Psoas muscle (tissue), 8 donors: ENCODE measurements at regions of chr5 and their contacts with region 1.

Region 1: GRCh38 chr5:172902497-172903200 is 56.6 kb upstream of the RPL26L1 start:
- DNase-seq: peak; percentile 83 to 89
- ATAC-seq: peak; percentile 52 to 75 (median 55)
- H3K4me3 ChIP-seq: no peak overlapping the region
- H3K27ac ChIP-seq: peak overlapping the region; percentile 97
- H3K4me1 ChIP-seq: peaks cover 74% of the 10 kb centered on the region
- H3K27me3 ChIP-seq: no peaks in the 10 kb centered on the region
- CTCF ChIP-seq: peak; percentile 38

Region 2: DNA sequence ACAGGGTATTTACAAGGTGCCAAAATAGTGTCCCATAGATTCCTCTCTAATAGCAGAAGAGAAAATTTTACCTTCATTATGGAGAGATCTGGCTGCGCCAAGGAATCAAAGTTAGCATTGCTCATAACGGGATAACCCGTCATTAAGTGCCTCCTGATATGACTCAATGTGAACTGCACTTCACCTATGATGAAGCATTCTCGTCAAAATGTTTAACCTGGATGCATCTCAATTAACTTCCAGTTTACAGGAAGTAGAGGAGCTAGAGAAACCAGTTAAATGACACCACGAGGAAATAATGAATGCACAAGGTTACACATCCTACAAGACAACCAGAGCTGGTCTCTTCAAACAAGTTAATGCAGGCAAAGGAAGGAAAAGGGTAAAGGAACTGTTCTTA is 913.4 kb before region 1 on chr5:
- intact Hi-C with region 1: no loop called
- DNase-seq: no peak
- ATAC-seq: no peak
- H3K4me3 ChIP-seq: no peak overlapping the region
- H3K27ac ChIP-seq: no peak overlapping the region
- H3K4me1 ChIP-seq: peaks cover 9% of the 10 kb centered on the region
- H3K27me3 ChIP-seq: no peaks in the 10 kb centered on the region
- CTCF ChIP-seq: no peak

Region 3: DNA sequence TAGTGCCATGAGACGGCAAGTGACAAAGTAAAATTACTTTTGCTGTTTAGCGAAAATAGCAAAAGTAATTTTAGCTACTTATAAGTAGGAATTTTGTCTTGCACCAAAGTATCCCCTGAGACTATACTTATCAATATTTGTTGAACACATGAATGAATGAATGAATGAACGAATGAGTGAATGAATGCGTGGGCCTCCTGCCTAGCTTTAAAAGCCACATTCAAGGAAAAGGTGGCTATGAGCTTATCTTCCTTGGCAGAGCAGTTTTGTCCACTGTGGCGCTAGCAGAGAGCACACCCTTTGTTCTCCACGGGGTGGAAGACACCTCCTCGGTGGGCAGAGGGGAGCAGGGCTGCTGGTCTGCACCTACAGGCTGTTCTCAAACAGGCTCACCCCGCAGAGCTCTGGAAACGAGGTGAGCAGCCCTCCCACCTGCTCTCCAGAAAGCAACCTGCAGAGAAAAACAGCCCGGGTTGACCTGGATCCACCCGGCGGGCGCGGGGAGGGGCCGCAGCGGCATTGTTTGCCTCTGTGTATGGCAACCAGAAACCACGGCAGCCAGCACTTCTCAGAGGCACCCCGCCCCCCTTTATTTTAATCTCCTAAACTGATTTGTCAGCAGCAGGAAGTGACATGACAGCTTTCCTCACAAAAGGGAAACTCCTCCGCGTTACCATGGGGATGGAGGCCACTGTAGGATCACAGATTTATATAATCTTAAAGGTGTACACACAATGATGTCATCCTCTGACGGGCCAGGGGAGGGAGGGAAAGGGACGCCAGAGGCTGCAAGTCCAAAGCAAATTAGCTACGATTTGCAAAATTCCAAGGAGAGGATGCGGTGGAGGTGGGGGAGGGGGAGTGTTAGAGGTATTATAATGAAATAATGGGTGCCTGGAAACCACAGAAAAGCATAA is 137.5 kb before region 1 on chr5:
- intact Hi-C with region 1: loop called (anchors 2 to 5 kb)
- DNase-seq: peak; percentile 86 to 91
- ATAC-seq: peak; percentile 39 to 56 (median 50)
- H3K4me3 ChIP-seq: peak overlapping the region; percentile 79
- H3K27ac ChIP-seq: peak overlapping the region; percentile 98
- H3K4me1 ChIP-seq: peaks cover 21% of the 10 kb centered on the region
- H3K27me3 ChIP-seq: no peaks in the 10 kb centered on the region
- CTCF ChIP-seq: no peak

Region 4: DNA sequence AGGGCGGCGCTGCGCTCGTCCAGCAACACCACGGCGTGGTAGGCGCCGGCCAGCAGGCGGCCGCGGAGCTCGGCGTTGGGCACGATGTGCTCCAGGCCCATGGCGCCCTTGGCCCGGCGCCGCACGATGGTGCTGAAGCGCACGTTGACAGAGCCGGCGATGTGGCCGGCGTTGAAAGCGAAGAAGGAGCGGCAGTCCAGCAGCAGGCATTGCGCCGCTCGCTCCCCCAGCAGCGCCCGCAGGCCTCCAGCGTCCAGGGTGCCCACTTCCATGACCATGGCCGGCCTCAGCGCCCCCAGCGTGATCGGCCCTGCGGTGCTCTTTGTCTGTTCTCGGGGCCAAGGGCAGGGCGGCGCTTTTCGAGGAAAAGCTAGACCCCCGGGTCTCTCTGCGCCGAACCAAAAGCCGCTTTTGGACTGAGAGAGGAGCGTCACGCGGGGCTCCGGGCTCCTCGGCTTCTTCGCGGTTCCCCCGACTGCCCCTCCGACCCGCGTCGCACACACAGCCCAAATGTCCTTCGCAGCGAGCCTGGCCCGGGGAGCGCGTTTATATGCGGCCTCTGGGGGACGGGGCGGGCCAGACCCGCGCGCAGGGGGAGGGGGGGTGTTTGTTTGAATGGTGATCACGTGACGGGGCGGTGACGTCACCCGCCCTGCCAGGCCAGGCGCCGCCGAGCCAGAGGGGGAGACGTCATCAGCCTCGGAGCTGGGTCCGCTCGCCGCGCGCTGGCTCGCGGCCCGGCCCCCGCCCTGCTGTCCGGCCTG is 131.8 kb before region 1 on chr5 and contains the start of gene DUSP1:
- intact Hi-C with region 1: loop called (anchors 2 to 5 kb)
- DNase-seq: peak; percentile 100
- ATAC-seq: peak; percentile 64 to 69 (median 66)
- H3K4me3 ChIP-seq: peak within 1 kb of the TSS; percentile 79
- H3K27ac ChIP-seq: peak within 1 kb of the TSS; percentile 98
- H3K4me1 ChIP-seq: peaks cover 46% of the 10 kb centered on the region
- H3K27me3 ChIP-seq: no peaks in the 10 kb centered on the region
- CTCF ChIP-seq: peak; percentile 57
- total RNA-seq, gene DUSP1: 89.0 to 287 (median 164) TPM

Region 5: DNA sequence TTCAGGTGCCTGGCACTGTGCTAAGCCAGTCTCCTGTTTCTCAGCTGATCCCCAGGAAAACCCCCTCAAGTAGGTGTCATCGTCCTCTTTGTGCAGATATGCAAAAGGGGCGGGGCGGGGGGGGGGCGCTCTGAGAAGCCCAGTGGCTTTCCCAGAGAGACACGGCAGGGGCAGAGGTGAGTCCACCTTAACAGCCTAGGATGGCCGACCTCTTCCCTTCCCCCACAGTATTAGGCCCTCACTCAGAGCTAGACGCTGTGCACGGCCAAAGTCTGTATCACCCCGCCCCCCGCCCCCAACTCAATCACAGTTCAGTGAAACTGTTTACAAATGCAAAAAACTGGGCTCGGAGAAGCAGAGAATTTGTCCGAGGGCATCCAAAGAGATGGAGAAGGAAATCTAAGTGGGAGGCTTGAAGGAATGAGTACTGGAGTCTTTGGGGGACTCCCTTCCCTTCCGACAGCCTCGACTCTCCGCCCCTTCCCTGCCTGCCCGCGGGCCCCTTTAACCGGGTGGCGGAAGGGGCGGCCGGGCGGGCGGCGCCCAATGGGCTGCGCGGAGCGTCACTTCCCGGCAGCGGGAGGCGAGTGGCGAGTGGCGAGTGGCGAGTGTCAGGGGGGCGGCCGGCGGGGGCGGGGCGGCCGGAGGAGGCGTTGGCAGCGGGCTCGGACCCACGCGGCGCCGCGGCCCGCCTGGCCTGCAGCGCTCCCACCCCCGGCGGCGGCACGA is 68.8 kb before region 1 on chr5 and contains the start of gene ERGIC1:
- intact Hi-C with region 1: loop called in 1 of 2 experiments (anchors 2 kb)
- DNase-seq: peak; percentile 91 to 94
- ATAC-seq: peak; percentile 90 to 97 (median 92)
- H3K4me3 ChIP-seq: peak within 1 kb of the TSS; percentile 88
- H3K27ac ChIP-seq: peak within 1 kb of the TSS; percentile 82
- H3K4me1 ChIP-seq: peaks cover 40% of the 10 kb centered on the region
- H3K27me3 ChIP-seq: no peaks in the 10 kb centered on the region
- CTCF ChIP-seq: no peak
- total RNA-seq, gene ERGIC1: 49.9 to 86.5 (median 53.7) TPM

Region 6: GRCh38 chr5:172860520-172861443 is 41.9 kb before region 1 on chr5:
- intact Hi-C with region 1: loop called (anchors 5 kb)
- DNase-seq: peak; percentile 91 to 97
- ATAC-seq: peak; percentile 83 to 89 (median 84)
- H3K4me3 ChIP-seq: peak overlapping the region; percentile 17
- H3K27ac ChIP-seq: peak overlapping the region; percentile 92
- H3K4me1 ChIP-seq: peaks cover 80% of the 10 kb centered on the region
- H3K27me3 ChIP-seq: no peaks in the 10 kb centered on the region
- CTCF ChIP-seq: no peak

Region 7: GRCh38 chr5:172868924-172869591 is 33.6 kb before region 1 on chr5:
- intact Hi-C with region 1: loop called (anchors 2 to 5 kb)
- DNase-seq: peak; percentile 90 to 95
- ATAC-seq: peak; percentile 67 to 81 (median 76)
- H3K4me3 ChIP-seq: peak overlapping the region; percentile 5
- H3K27ac ChIP-seq: peak overlapping the region; percentile 95
- H3K4me1 ChIP-seq: peaks cover 94% of the 10 kb centered on the region
- H3K27me3 ChIP-seq: no peaks in the 10 kb centered on the region
- CTCF ChIP-seq: peak; percentile 8